CD8-positive, alpha-beta T cell (primary cell): ENCODE measurements at regions of chr2 and their contacts with region 1.

Region 1: DNA sequence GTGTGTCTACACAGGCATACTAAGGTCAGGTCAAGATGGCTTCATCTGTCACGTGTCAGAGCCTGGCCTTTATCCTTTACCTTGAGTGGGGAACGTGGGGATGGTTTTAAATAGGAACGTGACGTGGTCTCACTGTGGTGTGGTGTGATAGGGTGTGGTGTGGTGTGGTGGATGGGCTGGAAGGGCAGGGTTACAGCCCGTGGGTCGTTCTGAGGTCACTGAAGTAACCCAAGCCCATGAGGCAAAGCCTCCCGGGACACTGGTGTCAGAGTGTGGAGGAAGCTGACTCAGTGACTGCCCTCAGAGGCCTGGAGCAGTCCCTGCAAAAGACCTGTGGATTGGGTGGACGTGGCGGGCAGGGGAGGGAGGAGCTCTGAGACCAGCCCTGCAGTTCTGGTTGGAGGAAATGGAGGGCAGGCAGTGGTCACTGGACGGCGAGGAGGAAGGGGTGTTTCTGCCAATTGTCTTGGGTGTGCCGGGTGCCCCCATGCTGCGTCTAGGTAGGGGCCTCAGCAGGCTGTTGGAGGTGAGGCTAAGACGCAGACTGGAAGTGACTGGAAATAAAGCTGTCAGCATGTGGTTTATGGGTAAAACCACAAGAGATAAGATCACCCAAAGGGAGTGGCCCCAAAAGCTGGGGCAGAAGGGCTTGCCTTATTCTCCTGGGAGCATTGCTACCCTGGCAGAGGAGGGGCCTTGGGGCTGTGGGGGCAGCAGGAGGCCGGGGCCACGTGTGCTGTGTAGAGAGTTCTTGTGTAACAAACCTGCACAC is 84.8 kb downstream of the SH3RF3 start:
- DNase-seq: peak; percentile 28 to 86 (median 66)
- ATAC-seq: peak; percentile 79
- H3K4me3 ChIP-seq: no peak overlapping the region
- H3K4me3 Mint-ChIP-seq: peak overlapping the region; percentile 46
- H3K27ac ChIP-seq: no peak overlapping the region
- H3K27ac Mint-ChIP-seq: peak overlapping the region; percentile 69
- H3K4me1 ChIP-seq: peaks cover 59% of the 10 kb centered on the region
- H3K4me1 Mint-ChIP-seq: peaks cover 74% of the 10 kb centered on the region
- H3K27me3 ChIP-seq: peaks cover 18 to 21% of the 10 kb centered on the region in 2 experiments
- H3K27me3 Mint-ChIP-seq: peaks cover 56% of the 10 kb centered on the region
- CTCF ChIP-seq: no peak

Region 2: GRCh38 chr2:109143214-109144187 is 70.3 kb before region 1 on chr2:
- CTCF ChIA-PET with region 1: no interaction called
- POLR2A ChIA-PET with region 1: no interaction called
- intact Hi-C with region 1: loop called in 1 of 2 experiments (anchors 2 kb)
- DNase-seq: peak in 6 of 9 experiments; percentile 21 to 67 (median 48)
- ATAC-seq: peak; percentile 69
- H3K4me3 ChIP-seq: peak overlapping the region in 1 of 2 experiments; percentile 7
- H3K4me3 Mint-ChIP-seq: peak overlapping the region; percentile 26
- H3K27ac ChIP-seq: no peak overlapping the region
- H3K27ac Mint-ChIP-seq: peak overlapping the region; percentile 73
- H3K4me1 ChIP-seq: peaks cover 15% of the 10 kb centered on the region
- H3K4me1 Mint-ChIP-seq: peaks cover 46% of the 10 kb centered on the region
- H3K27me3 ChIP-seq: peaks cover 0 to 3% of the 10 kb centered on the region in 2 experiments
- H3K27me3 Mint-ChIP-seq: no peaks in the 10 kb centered on the region
- CTCF ChIP-seq: no peak

Region 3: DNA sequence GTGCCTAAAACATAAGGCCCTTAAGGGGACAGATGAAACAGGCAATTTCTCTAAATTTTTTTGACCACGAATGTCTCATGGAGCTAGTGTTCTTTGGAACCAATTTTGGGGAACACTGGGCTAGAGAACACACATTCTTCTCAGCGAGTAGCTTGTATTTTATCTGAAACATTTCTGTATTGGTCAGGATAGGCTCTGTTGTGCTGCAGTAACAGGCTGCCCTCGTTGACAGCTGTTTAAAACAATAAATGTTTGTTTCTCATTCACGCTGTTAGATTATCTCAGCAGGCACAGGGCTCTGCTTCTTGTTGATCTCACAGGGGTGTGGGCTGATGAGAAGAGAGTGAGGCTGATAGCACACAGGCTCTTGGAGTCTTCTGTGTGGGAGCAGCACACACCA is 20.5 kb after region 1 on chr2:
- CTCF ChIA-PET with region 1: no interaction called
- POLR2A ChIA-PET with region 1: no interaction called
- intact Hi-C with region 1: loop called in 1 of 2 experiments (anchors 2 kb)
- DNase-seq: peak in 1 of 9 experiments; percentile 25
- ATAC-seq: no peak
- H3K4me3 ChIP-seq: no peak overlapping the region
- H3K4me3 Mint-ChIP-seq: no peak overlapping the region
- H3K27ac ChIP-seq: no peak overlapping the region
- H3K27ac Mint-ChIP-seq: no peak overlapping the region
- H3K4me1 ChIP-seq: peaks cover 16% of the 10 kb centered on the region
- H3K4me1 Mint-ChIP-seq: peaks cover 29% of the 10 kb centered on the region
- H3K27me3 ChIP-seq: peaks cover 0 to 2% of the 10 kb centered on the region in 2 experiments
- H3K27me3 Mint-ChIP-seq: peaks cover 2% of the 10 kb centered on the region
- CTCF ChIP-seq: no peak

Region 4: DNA sequence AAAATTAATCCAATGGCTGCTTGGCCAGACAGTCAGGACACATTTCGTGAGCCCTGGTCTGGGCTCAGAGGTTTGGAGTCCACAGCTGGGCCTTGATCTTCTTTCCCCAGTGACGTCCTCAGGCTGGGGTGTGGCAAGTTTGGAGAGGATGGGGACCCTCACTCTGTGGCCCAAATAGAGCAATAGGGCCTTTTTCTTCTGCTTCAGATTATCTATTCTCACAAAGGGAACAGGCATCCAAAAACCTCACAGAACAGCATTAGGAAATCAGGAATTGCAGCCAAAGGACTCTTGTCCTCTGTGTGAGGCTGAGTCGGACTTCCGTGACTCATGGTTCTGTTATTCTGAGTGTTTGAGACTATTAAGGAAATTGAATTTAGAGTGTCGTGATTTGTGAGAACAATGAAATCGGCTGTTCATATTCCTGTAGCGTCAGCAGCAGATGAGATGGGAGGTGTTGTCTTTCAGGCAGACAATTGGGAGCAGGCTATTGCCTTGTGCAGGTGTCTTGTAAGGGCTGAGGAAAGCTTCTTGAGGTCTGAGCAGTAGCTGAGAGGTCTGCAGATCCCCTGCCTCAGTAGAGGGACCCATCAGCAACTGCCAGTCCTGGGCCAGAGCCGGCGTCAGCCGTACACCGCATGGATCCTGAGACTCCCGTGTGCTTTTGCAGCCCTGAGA is 29.0 kb after region 1 on chr2:
- CTCF ChIA-PET with region 1: no interaction called
- POLR2A ChIA-PET with region 1: no interaction called
- intact Hi-C with region 1: loop called in 1 of 2 experiments (anchors 5 kb)
- DNase-seq: peak in 1 of 9 experiments; percentile 25
- ATAC-seq: no peak
- H3K4me3 ChIP-seq: no peak overlapping the region
- H3K4me3 Mint-ChIP-seq: no peak overlapping the region
- H3K27ac ChIP-seq: no peak overlapping the region
- H3K27ac Mint-ChIP-seq: no peak overlapping the region
- H3K4me1 ChIP-seq: peaks cover 14% of the 10 kb centered on the region
- H3K4me1 Mint-ChIP-seq: peaks cover 24% of the 10 kb centered on the region
- H3K27me3 ChIP-seq: no peaks in the 10 kb centered on the region
- H3K27me3 Mint-ChIP-seq: no peaks in the 10 kb centered on the region
- CTCF ChIP-seq: no peak